Esophagus squamous epithelium (tissue), 5 donors: ENCODE measurements at regions of chr5 and their contacts with region 1.

Region 1: GRCh38 chr5:59810041-59810440 is 83.5 kb downstream of the PDE4D start:
- DNase-seq: peak; percentile 5
- H3K4me3 ChIP-seq: peak overlapping the region in 1 of 4 donors; percentile 45
- H3K27ac ChIP-seq: no peak overlapping the region
- H3K4me1 ChIP-seq: peaks cover 0 to 5% (median 0%) of the 10 kb centered on the region in 3 donors
- H3K27me3 ChIP-seq: no peaks in the 10 kb centered on the region
- CTCF ChIP-seq: peak; percentile 82 to 91 (median 88)
- POLR2A ChIP-seq: no peak

Region 2: GRCh38 chr5:59777028-59777427 is 33.0 kb before region 1 on chr5:
- intact Hi-C with region 1: no loop called
- DNase-seq: no peak
- H3K4me3 ChIP-seq: no peak overlapping the region
- H3K27ac ChIP-seq: no peak overlapping the region
- H3K4me1 ChIP-seq: peaks cover 0 to 15% (median 7%) of the 10 kb centered on the region in 3 donors
- H3K27me3 ChIP-seq: no peaks in the 10 kb centered on the region
- CTCF ChIP-seq: no peak
- POLR2A ChIP-seq: no peak

Region 3: GRCh38 chr5:60586307-60586901 is 776.4 kb after region 1 on chr5:
- intact Hi-C with region 1: loop called (anchors 10 kb)
- DNase-seq: no peak
- H3K4me3 ChIP-seq: no peak overlapping the region
- H3K27ac ChIP-seq: no peak overlapping the region
- H3K4me1 ChIP-seq: no peaks in the 10 kb centered on the region
- H3K27me3 ChIP-seq: no peaks in the 10 kb centered on the region
- CTCF ChIP-seq: peak in 4 of 6 experiments; percentile 29 to 56 (median 45)
- POLR2A ChIP-seq: no peak

Region 4: DNA sequence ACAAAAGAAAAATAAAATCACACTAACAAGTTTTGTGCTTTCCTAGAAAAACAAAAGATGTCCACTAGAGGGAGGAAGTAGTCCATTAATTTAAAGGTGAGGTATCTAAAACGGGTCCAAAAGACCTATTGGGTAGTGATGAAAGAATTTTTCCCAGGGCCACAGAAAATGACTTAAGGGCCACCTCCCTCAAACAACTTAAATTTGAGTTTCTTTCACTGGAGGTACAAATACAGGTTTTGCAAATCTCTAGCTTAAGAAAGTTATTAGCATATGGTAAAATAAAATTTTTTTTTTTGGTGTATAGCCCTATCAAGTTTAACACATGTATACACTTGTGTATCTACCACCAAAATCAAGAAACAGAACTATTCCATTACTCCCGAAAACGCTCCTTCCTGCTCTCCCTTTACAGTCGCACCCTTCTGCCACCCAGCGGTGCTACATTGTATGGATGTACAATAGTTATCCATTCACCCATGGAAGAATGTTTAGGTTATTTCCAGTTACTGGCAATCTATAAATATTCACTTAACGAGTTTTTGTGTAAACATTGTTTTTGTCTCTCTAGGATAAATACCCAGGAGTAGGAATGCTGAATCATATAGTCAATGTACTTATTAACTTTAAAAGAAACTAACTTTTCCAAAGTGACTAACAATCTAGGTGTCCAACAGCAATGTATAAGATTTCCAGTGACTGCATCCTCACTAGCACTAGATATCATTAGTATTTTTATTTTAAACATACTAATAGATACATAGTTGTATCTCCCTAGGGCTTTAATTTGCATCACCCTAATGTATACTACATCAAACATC is 868.0 kb after region 1 on chr5:
- intact Hi-C with region 1: loop called (anchors 10 kb)
- DNase-seq: no peak
- H3K4me3 ChIP-seq: no peak overlapping the region
- H3K27ac ChIP-seq: no peak overlapping the region
- H3K4me1 ChIP-seq: peaks cover 0 to 7% (median 0%) of the 10 kb centered on the region in 3 donors
- H3K27me3 ChIP-seq: no peaks in the 10 kb centered on the region
- CTCF ChIP-seq: peak in 5 of 6 experiments; percentile 20 to 57 (median 22)
- POLR2A ChIP-seq: no peak